HepG2 (cell line): ENCODE measurements at regions of chrX and their contacts with region 1.

Region 1: GRCh38 chrX:41923257-41923969 is at the start of gene CASK:
- DNase-seq: peak; percentile 78
- ATAC-seq: peak; percentile 91
- H3K4me3 ChIP-seq: peak within 1 kb of the TSS; percentile 77 to 79 (median 78)
- H3K27ac ChIP-seq: peak within 1 kb of the TSS; percentile 63
- H3K4me1 ChIP-seq: peaks cover 35% of the 10 kb centered on the region; the same call in 1 of the 2 replicates
- H3K27me3 ChIP-seq: no peaks in the 10 kb centered on the region
- CTCF ChIP-seq: no peak; the same call in 1 of the 2 replicates
- EP300 ChIP-seq: no peak; a peak in 2 of 4 replicates
- POLR2A ChIP-seq: peak in 1 of 2 experiments; percentile 41; a peak in 1 of 4 replicates
- RAD21 ChIP-seq: peak; percentile 18; the same call in 1 of the 2 replicates
- total RNA-seq, gene CASK: 16.0 and 16.1 TPM in 2 replicates

Region 2: GRCh38 chrX:41802958-41803357 is 120.5 kb before region 1 on chrX:
- CTCF ChIA-PET with region 1: no interaction called
- POLR2A ChIA-PET with region 1: no interaction called
- in situ Hi-C with region 1: no loop called
- intact Hi-C with region 1: loop called (anchors 5 kb)
- DNase-seq: no peak
- ATAC-seq: no peak
- H3K4me3 ChIP-seq: no peak overlapping the region
- H3K27ac ChIP-seq: no peak overlapping the region
- H3K4me1 ChIP-seq: no peaks in the 10 kb centered on the region
- H3K27me3 ChIP-seq: no peaks in the 10 kb centered on the region
- CTCF ChIP-seq: peak; percentile 14; the same call in 1 of the 2 replicates
- EP300 ChIP-seq: no peak
- POLR2A ChIP-seq: no peak
- RAD21 ChIP-seq: no peak

Region 3: GRCh38 chrX:41824551-41824950 is 98.9 kb before region 1 on chrX:
- CTCF ChIA-PET with region 1: no interaction called
- POLR2A ChIA-PET with region 1: no interaction called
- in situ Hi-C with region 1: no loop called
- intact Hi-C with region 1: loop called (anchors 5 kb)
- DNase-seq: no peak
- ATAC-seq: no peak; the same call in 2 of the 3 replicates
- H3K4me3 ChIP-seq: no peak overlapping the region
- H3K27ac ChIP-seq: no peak overlapping the region
- H3K4me1 ChIP-seq: peaks cover 23% of the 10 kb centered on the region
- H3K27me3 ChIP-seq: no peaks in the 10 kb centered on the region
- CTCF ChIP-seq: no peak
- EP300 ChIP-seq: no peak
- POLR2A ChIP-seq: no peak
- RAD21 ChIP-seq: no peak

Region 4: DNA sequence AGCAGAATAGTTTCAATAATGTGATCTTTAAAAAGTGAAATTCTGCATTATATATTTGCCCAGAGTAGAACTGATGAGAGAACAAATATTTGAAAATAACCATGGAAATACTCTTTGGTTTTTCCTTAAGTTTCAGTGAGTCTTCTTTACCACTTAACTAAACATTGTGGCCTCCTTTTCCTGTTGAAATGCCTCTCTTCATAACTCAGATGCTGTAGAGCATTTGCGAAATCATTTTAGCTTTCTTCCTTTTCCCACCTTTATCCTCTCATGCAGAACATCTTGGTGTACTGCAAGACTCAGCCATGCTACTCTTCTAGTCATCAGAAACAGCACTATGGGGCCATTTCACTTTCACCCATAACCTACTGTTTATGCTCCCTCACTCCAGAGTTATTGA is 48.3 kb before region 1 on chrX:
- CTCF ChIA-PET with region 1: no interaction called
- POLR2A ChIA-PET with region 1: no interaction called
- in situ Hi-C with region 1: no loop called
- intact Hi-C with region 1: loop called (anchors 5 kb)
- DNase-seq: no peak
- ATAC-seq: no peak
- H3K4me3 ChIP-seq: no peak overlapping the region
- H3K27ac ChIP-seq: no peak overlapping the region
- H3K4me1 ChIP-seq: peaks cover 49% of the 10 kb centered on the region
- H3K27me3 ChIP-seq: no peaks in the 10 kb centered on the region
- CTCF ChIP-seq: no peak
- EP300 ChIP-seq: no peak
- POLR2A ChIP-seq: no peak
- RAD21 ChIP-seq: no peak

Region 5: DNA sequence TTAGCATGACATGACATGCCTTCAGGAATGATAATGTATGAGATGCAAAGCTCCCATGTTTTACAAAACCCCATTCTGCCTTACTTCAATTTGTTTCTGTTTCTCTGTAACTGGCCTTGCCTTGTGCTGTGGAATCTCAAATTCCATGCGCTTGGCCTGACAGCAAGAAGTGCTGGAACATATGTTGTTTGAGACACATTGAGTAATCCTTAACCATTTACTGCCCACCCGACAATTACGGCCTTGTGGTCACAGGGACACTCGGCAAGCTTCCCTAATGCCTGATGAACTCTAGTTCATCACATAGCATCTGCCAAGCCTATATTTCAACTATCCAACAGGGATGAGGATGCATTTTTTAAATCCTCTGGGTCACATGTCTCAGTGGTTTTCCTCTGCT is 226.4 kb after region 1 on chrX:
- CTCF ChIA-PET with region 1: no interaction called
- POLR2A ChIA-PET with region 1: no interaction called
- in situ Hi-C with region 1: no loop called
- intact Hi-C with region 1: no loop called
- DNase-seq: no peak
- ATAC-seq: no peak
- H3K4me3 ChIP-seq: no peak overlapping the region
- H3K27ac ChIP-seq: no peak overlapping the region
- H3K4me1 ChIP-seq: no peaks in the 10 kb centered on the region
- H3K27me3 ChIP-seq: no peaks in the 10 kb centered on the region
- CTCF ChIP-seq: no peak
- EP300 ChIP-seq: no peak
- POLR2A ChIP-seq: no peak
- RAD21 ChIP-seq: no peak